Psoas muscle (tissue), 8 donors: ENCODE measurements at regions of chr6 and their contacts with region 1.

Region 1: DNA sequence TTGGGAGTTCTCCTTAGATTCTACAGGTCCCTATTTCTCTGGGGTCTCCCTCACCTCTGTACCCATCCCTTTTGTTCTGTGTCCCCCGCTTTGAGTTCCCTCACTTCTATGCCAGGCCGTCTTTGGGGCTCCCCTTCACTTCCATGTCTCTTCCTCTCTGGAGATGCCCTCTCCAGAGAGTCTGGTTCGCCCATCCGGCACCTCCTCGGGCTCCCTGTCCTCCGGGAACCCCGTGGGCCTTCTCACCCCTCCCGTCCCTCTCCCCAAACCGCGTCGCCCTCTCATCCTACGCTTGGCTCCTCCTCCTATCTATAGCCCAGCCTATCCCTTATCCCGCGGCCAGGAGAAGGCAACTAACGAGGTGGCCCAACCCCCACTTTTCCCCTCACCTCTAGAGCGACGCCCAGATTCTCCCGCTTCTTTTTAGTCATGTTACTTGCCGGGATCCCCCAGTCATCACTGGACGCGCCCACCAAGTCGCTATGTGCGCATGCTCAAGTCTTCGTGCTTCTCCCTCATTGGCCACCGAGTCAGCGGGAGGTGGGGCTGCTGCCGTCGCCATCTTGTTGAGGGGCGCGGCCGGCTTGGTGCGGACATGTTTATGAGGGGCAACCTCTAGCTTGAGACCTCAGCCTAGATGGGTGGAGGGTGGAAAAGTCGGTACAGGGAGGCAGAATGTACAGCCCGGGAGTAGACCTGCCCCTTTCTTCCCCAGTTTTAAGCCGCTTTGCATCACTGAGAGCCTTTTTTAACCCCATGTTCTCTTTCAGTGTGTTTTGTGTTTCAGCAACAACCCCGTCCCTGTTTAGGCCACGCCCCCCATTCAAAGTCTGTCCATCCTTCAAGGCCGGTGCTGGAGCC is at the start of gene CCDC167:
- DNase-seq: peak; percentile 95 to 97
- ATAC-seq: peak; percentile 99 to 100 (median 100)
- H3K4me3 ChIP-seq: peak within 1 kb of the TSS; percentile 86
- H3K27ac ChIP-seq: no peak within 1 kb of the TSS
- H3K4me1 ChIP-seq: no peaks in the 10 kb centered on the region
- H3K27me3 ChIP-seq: no peaks in the 10 kb centered on the region
- CTCF ChIP-seq: no peak
- total RNA-seq, gene CCDC167: 11.5 to 15.7 (median 14.3) TPM

Region 2: GRCh38 chr6:37092923-37093920 is 406.4 kb before region 1 on chr6:
- intact Hi-C with region 1: loop called in 1 of 2 experiments (anchors 10 kb)
- DNase-seq: peak; percentile 38 to 58
- ATAC-seq: peak in 1 of 4 donors; percentile 11
- H3K4me3 ChIP-seq: no peak overlapping the region
- H3K27ac ChIP-seq: no peak overlapping the region
- H3K4me1 ChIP-seq: peaks cover 7% of the 10 kb centered on the region
- H3K27me3 ChIP-seq: no peaks in the 10 kb centered on the region
- CTCF ChIP-seq: no peak

Region 3: DNA sequence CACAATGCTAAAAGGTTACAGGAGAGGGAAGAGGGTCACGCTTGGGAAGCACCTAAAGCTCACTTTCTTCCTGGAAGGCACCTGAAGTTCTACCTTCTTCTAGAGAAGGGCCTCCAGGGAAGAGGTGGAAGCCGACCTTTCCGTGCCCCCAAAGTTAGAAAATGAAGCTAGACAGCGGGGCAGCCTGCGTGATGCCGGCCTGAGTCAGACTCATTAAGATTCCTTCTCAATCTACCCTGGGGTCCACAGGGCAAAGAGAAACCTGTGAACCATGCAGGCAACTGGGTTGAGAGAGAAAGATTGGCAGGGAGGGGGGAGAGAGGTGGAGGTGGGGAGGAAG is 54.8 kb after region 1 on chr6:
- intact Hi-C with region 1: no loop called
- DNase-seq: no peak
- ATAC-seq: no peak
- H3K4me3 ChIP-seq: no peak overlapping the region
- H3K27ac ChIP-seq: no peak overlapping the region
- H3K4me1 ChIP-seq: no peaks in the 10 kb centered on the region
- H3K27me3 ChIP-seq: peaks cover 2 to 18% (median 8%) of the 10 kb centered on the region in 3 donors
- CTCF ChIP-seq: no peak